ENCODE measurements at regions of chr10 and their contacts with region 1.

Region 1: DNA sequence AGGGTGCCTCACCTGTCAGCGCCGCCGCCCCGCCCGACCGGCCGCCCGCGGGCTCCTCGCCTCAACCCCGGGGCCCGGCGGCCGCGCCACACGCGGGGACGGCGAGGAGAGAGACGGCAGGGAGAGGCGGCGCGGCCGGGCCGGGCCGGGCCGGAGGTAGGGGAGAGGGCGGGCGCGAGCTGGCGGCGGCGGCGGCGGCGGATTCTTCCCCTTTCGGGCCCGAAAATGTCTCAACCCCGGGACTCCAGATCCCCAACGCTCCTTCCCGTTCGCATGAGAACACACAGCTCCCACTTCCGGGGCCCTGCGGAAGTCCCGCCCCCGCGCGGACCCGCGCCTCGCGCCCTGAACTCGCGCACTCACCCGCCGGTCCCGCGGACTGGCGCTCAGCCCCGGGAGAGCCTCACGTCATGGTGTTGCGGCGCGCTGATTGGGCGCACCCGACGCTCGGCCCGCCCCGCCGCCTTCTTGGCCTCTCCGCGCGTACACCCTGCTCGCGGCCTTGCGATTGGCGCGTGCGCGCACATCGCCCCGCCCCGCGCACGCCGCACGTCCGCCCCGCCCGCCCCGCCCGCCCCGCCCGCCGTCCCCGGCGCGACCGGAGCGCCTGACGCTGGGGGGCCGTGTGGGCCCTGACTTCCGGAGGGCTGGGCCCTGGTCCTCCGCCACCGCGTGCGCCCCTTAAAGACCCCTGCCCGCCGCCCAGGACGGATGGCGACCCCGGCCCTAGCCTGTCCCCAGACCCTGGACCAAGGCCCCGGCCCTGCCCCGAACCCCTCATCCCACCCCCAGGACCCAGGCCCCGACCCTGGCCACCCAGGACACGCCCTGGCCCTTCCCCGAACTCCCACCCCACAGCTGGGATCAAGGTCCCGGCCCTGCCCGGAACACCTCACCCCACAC is at the start of gene LARP4B:
- DNase-seq: peak; percentile 86 to 97
- H3K4me3 ChIP-seq: peak within 1 kb of the TSS; percentile 98
- H3K27ac ChIP-seq: peak within 1 kb of the TSS; percentile 63
- H3K4me1 ChIP-seq: peaks cover 14% of the 10 kb centered on the region; the same call in 1 of the 2 replicates
- H3K27me3 ChIP-seq: no peaks in the 10 kb centered on the region
- CTCF ChIP-seq: no peak
- total RNA-seq, gene LARP4B: 93.4 and 109 TPM in 2 replicates

Region 2: DNA sequence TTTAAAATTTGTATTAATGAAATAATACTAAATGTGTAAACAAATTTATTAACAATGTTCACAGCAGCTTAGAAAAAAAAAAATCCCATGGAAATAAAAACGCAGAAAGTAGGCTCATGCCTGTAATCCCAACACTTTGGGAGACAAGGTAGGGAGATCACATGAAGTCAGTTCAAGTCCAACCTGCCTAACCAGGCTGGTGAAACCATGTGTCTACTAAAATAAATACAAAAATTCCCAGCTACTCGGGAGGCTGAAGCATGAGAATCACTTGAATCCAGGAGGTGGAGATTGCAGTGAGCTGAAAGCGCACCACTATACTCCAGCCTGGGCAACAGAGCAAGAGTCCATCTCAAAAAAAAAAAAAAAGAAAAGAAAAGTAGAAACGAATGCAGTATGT is 36.3 kb before region 1 on chr10:
- CTCF ChIA-PET with region 1: no interaction called
- POLR2A ChIA-PET with region 1: interaction called, 14 read pairs
- intact Hi-C with region 1: no loop called
- DNase-seq: no peak
- H3K4me3 ChIP-seq: no peak overlapping the region
- H3K27ac ChIP-seq: no peak overlapping the region
- H3K4me1 ChIP-seq: no peaks in the 10 kb centered on the region
- H3K27me3 ChIP-seq: no peaks in the 10 kb centered on the region
- CTCF ChIP-seq: no peak

Region 3: DNA sequence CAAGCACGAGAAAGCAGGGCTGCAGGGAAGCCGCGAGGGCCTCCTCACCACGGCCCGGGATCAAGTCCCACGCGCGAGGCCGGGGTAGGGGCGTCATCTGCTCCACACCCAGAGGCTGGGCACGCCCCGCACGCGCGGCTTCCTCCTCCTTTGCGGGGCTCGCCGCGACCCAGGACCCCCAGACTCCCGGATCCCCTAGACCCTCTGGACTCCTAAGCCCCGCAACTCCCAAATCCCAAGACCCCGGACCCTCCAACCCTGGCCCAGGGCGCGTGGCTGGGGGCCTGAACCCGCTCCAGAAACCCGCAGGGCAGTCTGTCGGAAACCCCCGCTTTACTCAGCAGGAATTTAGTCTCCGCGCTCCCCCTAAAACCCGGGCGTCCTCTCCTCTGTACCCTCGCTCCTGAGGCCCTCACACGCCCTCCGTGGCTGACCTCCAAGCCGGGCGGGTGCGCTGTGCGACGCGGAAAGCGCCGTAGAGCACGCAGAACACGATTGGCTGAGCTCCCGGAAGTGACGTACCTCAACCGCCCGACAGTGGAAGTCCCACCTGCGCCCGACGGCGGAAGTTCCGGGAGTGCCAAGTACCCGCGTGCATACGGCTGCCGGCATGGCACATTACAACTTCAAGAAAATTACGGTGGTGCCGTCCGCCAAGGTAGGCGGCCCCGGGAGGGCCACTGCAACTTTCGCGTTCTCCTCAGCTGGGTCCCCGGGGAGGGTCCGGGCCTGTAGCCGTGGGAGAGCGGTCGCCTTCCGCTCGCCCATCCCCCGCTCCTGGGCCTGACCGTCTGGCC is 56.4 kb after region 1 on chr10 and contains the start of gene GTPBP4:
- CTCF ChIA-PET with region 1: no interaction called
- POLR2A ChIA-PET with region 1: no interaction called
- intact Hi-C with region 1: loop called (anchors 1 kb)
- DNase-seq: peak; percentile 89 to 91
- H3K4me3 ChIP-seq: peak within 1 kb of the TSS; percentile 91
- H3K27ac ChIP-seq: peak within 1 kb of the TSS; percentile 57
- H3K4me1 ChIP-seq: peaks cover 20% of the 10 kb centered on the region
- H3K27me3 ChIP-seq: no peaks in the 10 kb centered on the region
- CTCF ChIP-seq: no peak
- total RNA-seq, gene GTPBP4: 62.5 and 74.1 TPM in 2 replicates

Region 4: DNA sequence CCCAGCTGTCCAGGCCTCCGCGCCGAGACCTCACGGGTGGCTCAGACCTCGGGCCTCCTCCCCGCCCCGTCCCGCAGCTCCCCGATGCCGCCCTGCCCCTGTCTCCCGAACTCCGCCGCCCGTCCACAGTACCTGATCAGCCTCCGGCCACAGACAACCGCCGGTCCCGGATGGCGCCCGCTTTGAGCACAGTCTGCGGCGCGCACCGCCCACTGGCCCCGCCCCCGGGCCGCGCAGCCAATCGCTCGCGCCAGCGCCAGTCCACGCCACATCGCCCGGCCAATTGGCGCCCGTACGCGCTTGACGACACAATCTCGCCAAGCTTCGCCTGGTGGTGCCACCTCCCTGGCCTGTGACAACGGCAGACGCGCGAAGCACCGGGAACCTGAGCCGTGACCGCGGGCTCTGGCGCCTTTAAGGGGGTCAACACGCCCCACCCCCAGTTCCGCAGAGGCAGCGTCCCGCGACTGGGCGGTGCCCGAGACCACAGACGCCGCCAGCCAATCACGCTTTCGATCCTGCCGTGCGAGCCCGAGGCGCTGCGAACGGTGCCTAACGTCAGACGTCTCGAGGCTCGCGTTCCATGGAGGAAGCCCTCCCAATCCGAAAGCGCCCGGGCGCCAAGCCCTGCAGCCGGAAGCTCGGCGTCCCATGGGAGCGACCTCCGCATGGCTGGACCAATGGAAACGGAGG is 117.2 kb after region 1 on chr10 and contains the start of gene IDI1:
- CTCF ChIA-PET with region 1: no interaction called
- POLR2A ChIA-PET with region 1: interaction called, 7 read pairs
- intact Hi-C with region 1: loop called (anchors 1 kb)
- DNase-seq: peak; percentile 91 to 97
- H3K4me3 ChIP-seq: peak within 1 kb of the TSS; percentile 92
- H3K27ac ChIP-seq: peak within 1 kb of the TSS; percentile 87
- H3K4me1 ChIP-seq: peaks cover 16% of the 10 kb centered on the region
- H3K27me3 ChIP-seq: no peaks in the 10 kb centered on the region
- CTCF ChIP-seq: no peak
- total RNA-seq, gene IDI1: 38.5 and 57.7 TPM in 2 replicates

Measured in PC-9 (cell line).